ENCODE measurements at regions of chr3 and their contacts with region 1.

Region 1: DNA sequence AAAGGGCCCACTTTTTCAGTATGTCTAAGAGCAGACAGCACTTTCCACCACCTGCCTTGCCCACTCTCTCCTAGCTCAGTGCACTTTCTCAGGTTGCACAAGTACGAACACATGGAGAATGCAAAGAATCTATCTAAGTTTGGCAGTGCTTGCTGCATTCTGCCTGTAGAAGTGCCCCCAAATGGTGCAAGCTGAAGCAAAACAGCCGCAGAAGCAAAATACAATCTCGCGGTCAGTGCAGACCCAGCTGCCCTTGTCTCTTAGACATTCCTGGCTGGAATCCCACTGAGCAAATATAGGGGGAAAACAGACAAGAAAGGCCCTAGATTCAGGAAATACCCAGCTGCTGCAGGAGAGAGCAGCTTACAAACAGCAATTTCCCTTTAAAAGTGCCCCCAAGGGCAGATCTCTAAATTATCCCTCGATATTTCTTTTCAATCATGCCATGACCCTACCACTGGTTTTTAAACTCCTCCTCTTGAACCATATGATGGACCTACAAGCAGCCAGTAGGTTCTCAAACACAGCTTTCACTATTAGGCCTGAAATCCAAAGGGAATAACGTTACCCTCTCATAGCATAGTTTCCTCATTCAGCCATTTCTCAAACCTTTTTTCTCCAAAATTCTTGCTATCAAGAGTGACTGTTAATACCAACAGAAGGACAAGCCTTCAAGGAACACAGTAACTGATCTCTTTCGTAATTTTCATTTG is 67.0 kb downstream of the TNIK start:
- DNase-seq: no peak
- ATAC-seq: peak; percentile 46
- H3K4me3 ChIP-seq: no peak overlapping the region; the same call in 1 of the 2 replicates
- H3K27ac ChIP-seq: peak overlapping the region; percentile 46
- H3K4me1 ChIP-seq: peaks cover 19% of the 10 kb centered on the region
- H3K27me3 ChIP-seq: no peaks in the 10 kb centered on the region
- CTCF ChIP-seq: no peak
- EP300 ChIP-seq: no peak
- POLR2A ChIP-seq: no peak
- RAD21 ChIP-seq: no peak

Region 2: GRCh38 chr3:171375666-171376595 is 17.3 kb before region 1 on chr3:
- CTCF ChIA-PET with region 1: interaction called, 14 read pairs
- POLR2A ChIA-PET with region 1: interaction called, 4 read pairs
- RAD21 ChIA-PET with region 1: interaction called, 19 read pairs
- SMC1A ChIA-PET with region 1: interaction called, 10 read pairs
- in situ Hi-C with region 1: no loop called
- intact Hi-C with region 1: no loop called
- DNase-seq: no peak
- ATAC-seq: peak; percentile 69
- H3K4me3 ChIP-seq: no peak overlapping the region
- H3K27ac ChIP-seq: peak overlapping the region; percentile 22; the same call in 1 of the 2 replicates
- H3K4me1 ChIP-seq: peaks cover 37% of the 10 kb centered on the region
- H3K27me3 ChIP-seq: no peaks in the 10 kb centered on the region
- CTCF ChIP-seq: no peak
- EP300 ChIP-seq: no peak
- POLR2A ChIP-seq: no peak
- RAD21 ChIP-seq: no peak